ENCODE measurements at regions of chr1 and their contacts with region 1.

Region 1: GRCh38 chr1:24769656-24770651 is 24.7 kb downstream of the CLIC4 start:
- DNase-seq: no peak
- H3K4me3 ChIP-seq: no peak overlapping the region
- H3K27ac ChIP-seq: peak overlapping the region; percentile 57 to 69
- H3K4me1 ChIP-seq: peaks cover 1% of the 10 kb centered on the region
- H3K27me3 ChIP-seq: no peaks in the 10 kb centered on the region
- CTCF ChIP-seq: no peak
- EP300 ChIP-seq: no peak
- POLR2A ChIP-seq: no peak

Region 2: DNA sequence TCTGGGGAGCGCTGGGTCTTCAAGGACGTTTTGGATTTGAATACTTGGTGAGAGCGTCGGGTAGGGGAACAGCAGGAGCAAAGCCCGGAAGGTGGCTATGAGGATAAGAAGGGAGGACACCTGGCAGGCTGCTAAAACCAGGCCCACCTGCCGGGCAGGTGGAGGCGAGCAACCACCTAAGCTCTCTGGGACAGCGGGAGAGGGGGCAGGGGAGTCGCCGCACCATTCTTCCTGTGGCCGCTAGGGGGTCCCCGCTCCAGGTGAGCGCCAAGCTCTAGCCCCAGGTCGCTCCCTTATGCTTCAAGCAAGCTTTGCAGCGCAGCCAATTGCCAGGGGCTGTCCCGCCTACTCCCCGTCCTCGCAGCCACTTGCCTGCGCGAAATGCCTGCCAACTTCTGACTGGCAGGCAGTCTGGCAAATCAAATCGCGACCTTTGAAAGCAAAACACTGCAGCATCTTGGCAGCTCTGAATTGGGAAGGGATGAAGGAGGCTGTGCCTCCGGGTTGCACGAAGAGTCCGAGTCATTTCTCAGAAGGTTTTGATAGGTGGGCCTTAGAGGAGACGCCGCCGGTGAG is 354.5 kb before region 1 on chr1 and contains the start of gene NIPAL3:
- intact Hi-C with region 1: no loop called
- DNase-seq: peak; percentile 97 to 98 (median 98)
- H3K4me3 ChIP-seq: peak within 1 kb of the TSS; percentile 48
- H3K27ac ChIP-seq: peak within 1 kb of the TSS in 1 of 2 donors; percentile 8
- H3K4me1 ChIP-seq: peaks cover 2% of the 10 kb centered on the region
- H3K27me3 ChIP-seq: no peaks in the 10 kb centered on the region
- CTCF ChIP-seq: peak; percentile 68 to 77 (median 73)
- EP300 ChIP-seq: no peak
- POLR2A ChIP-seq: no peak
- total RNA-seq, gene NIPAL3: 8.2 to 22.3 (median 13.1) TPM

Region 3: DNA sequence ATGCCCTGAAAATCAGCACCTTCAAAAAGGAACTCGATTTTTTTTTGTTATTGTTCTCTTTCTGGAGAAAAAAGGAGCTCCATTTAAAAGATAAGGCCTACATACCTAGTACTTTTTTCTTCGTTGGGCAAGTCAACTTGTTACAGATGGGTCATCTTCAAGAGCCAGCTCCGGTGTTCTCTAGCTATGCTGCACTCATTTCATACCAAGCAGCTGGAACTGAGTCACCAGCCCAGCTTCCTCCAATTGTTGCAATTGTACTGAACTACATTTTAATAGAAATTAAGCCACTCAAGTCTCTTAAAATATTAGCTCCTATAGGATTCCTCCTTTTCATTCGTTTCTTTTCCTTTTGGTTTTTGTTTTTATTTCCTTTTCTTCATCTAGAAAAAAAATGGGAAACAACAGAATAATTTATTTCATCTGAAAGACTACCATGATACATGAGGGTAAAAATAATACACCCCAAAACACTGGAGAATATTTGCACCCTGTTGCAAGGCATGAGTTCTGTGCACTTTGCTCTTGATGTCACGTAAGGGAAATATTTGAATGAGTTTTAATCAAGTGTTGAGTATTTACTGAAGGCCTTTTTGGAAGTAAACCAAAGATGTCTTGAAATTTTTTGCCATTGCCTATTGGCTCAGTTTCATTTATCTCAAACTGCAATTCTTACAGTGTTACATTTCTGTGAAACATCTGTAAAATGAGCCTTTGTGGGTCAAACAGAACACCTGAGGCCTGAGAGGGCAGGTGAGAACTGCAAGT is 35.8 kb after region 1 on chr1:
- intact Hi-C with region 1: loop called in 1 of 4 experiments (anchors 10 kb)
- DNase-seq: no peak
- H3K4me3 ChIP-seq: no peak overlapping the region
- H3K27ac ChIP-seq: no peak overlapping the region
- H3K4me1 ChIP-seq: peaks cover 4% of the 10 kb centered on the region
- H3K27me3 ChIP-seq: no peaks in the 10 kb centered on the region
- CTCF ChIP-seq: no peak
- EP300 ChIP-seq: no peak
- POLR2A ChIP-seq: no peak

Region 4: DNA sequence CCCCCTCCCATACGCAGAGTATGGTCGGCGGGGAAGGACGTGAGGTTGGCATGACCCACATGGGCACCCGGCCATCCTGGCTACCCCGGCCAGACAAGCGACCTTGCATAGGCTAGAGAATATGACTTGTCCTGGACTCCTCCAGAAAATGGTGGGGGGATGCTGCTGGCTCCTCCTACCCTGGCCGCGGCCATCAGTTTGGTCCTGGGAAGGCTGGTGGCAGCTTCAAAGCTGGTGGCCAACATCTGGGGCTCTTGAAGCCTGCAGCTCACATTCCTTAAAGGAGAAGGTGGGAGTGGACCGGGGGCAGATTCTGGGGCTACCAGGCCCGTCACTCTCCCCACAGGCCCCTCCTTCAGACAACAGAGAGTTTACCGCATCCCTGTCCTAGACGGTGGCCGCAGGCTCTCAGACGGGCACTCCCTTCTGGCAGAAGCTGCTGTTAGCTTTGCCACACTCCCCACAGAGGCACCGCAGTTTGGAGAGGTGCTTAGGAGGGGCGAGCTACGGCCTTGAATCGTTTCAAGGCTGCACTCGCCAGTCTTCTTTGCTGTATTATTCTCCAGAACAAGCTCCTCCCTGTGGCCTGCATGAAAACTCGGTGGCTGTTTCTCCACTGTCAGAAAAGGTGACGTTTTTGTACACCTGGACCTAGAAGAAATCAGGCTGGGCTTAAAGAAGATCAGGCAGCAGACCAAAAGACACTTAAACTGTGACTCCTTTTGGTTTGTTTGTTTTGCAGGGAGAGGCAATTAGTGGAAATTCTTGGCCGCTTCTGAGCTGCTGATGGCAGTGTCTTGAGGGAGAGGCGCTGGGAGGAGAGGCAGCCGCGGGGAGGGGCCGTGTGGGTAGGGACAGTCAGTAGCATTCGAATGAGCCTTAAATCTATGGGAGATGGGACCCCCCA is 92.1 kb after region 1 on chr1:
- intact Hi-C with region 1: no loop called
- DNase-seq: no peak
- H3K4me3 ChIP-seq: no peak overlapping the region
- H3K27ac ChIP-seq: no peak overlapping the region
- H3K4me1 ChIP-seq: no peaks in the 10 kb centered on the region
- H3K27me3 ChIP-seq: no peaks in the 10 kb centered on the region
- CTCF ChIP-seq: no peak
- EP300 ChIP-seq: no peak
- POLR2A ChIP-seq: no peak